BJ (cell line): ENCODE measurements at regions of chr18 and their contacts with region 1.

Region 1: DNA sequence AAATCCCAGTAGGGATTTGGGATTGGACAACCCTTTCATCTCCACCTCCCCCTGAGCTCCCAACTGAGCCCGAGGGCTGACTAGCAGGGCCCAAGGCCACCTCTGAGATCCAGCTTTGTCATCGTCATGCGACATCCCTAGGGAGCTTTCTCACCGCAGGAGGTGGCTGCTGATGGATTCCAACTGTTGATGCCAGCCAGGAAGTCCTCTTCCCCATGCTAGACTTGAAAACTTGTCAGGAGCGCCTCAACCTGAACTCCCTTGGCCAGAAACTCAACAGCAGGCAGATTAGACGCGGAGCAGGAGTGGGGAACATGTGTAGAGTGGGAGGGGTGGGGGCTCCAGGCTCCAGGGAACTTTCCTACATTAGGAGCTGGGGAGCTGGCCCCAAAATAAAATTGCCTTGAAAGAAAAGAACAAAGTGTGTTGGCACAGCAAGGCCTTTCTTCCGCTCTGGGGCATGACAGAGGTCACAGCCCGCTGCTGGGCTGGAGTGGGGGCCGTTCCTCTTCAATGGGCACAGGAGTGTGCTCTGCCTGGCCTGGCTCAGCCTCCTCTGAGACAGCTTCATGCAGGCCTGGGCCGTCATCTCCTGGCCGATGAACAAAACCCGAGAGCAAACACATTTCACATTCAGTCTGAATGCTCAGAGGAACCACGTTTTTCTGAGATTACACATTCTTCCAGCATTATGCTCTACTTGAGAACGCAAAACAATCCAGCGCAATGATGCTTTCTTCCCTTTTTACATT is 34.5 kb downstream of the EMILIN2 start:
- DNase-seq: peak; percentile 84
- H3K4me3 ChIP-seq: no peak overlapping the region
- H3K27me3 ChIP-seq: no peaks in the 10 kb centered on the region
- CTCF ChIP-seq: peak; percentile 11; the same call in 1 of the 2 replicates

Region 2: DNA sequence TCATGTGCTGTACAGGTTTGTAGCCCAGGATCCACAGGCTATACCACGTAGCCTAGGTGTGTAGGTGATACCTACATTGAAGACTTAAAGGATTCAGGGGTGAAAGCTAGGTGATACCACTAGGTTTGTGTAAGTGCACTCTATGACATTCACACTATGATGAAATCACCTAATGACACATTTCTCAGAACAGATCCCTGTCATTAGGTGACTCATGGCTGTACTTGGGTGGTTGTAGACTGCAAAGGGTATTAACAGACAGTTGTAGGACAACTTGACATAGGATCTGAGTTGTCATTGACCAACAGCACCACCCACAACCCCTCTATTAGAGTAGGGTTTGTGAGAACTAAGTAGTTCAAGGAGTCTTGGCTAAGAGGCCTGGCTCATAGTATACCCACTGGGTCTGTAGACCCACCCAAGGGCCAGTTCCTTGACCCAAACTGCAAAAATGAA is 253.4 kb before region 1 on chr18:
- CTCF ChIA-PET with region 1: no interaction called
- POLR2A ChIA-PET with region 1: no interaction called
- DNase-seq: no peak
- H3K4me3 ChIP-seq: no peak overlapping the region
- H3K27me3 ChIP-seq: no peaks in the 10 kb centered on the region
- CTCF ChIP-seq: no peak

Region 3: GRCh38 chr18:3180325-3180724 is 299.1 kb after region 1 on chr18:
- CTCF ChIA-PET with region 1: no interaction called
- POLR2A ChIA-PET with region 1: interaction called, 11 read pairs
- DNase-seq: no peak
- H3K4me3 ChIP-seq: no peak overlapping the region
- H3K27me3 ChIP-seq: no peaks in the 10 kb centered on the region
- CTCF ChIP-seq: no peak